Activated CD8-positive, alpha-beta T cell treated with anti-CD3 and anti-CD28 coated beads, Interleukin-2, amount 10 ng/mL, durations not matched to agents 7 days and 5 days (primary cell): ENCODE measurements at regions of chr17 and their contacts with region 1.

Region 1: DNA sequence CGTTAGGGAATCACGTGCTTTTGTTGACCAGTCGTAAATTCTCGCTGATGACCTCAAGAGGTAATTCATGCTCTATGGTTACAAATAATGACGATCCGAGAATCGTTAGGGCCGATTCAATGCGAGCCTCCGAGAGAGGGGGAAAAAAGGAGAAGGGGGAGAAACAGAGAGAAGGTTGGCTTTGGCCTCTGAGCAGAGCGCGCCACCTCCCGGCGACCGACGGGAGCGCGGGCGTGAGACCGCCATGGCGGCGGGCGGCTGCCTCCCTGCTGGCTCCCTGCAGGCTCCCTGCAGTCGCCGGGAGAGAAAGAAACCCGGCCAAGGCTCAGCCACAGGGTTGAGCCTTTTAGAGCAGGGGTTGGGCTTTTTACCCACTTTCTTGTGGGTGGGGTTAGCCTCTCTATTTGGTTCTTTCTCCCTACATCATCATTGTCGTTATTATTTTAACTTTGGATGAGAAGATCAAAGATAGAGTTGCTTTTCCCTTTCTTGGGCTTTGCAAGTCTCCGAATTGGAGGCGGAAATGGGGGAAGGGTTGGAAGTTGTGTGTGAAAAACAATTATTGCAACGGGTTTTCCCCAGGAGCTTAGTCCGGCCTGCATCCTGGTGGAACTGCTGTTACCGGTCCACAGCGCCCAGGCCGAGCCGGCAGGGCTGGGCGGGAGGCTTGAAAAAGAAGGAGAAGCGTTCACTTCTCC is 410 bp upstream of the HOXB5 start:
- DNase-seq: peak; percentile 86
- ATAC-seq: peak; percentile 65
- H3K4me3 Mint-ChIP-seq: peak overlapping the region; percentile 76
- H3K27ac Mint-ChIP-seq: peak overlapping the region; percentile 23
- H3K4me1 Mint-ChIP-seq: peaks cover 44% of the 10 kb centered on the region
- H3K27me3 Mint-ChIP-seq: peaks cover 76% of the 10 kb centered on the region

Region 2: DNA sequence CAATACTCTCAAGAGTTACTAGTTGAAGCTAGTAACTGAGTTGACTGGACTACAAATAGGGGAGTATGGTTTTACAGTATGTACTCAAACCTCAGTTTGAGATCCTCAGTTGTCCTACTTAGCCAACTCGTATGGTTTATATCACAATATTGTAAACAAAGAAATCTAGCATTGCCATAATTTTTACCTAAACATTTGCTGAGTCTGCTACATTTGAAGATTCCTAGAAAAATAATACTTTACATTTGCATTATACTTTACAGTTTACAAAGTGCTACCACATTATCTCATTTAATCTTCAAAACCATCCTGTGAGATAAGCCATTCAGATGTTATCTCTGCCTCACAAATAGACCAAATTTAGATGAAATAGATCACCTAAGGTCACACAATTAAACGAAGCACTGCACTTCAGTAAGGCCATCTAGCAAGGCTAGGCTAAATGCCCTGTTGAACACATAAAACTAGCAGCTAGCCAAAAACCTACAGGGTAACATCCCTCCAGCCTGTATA is 509.0 kb before region 1 on chr17:
- CTCF ChIA-PET with region 1: interaction called, 18 read pairs
- POLR2A ChIA-PET with region 1: no interaction called
- DNase-seq: no peak
- ATAC-seq: no peak
- H3K4me3 Mint-ChIP-seq: no peak overlapping the region
- H3K27ac Mint-ChIP-seq: no peak overlapping the region
- H3K4me1 Mint-ChIP-seq: peaks cover 7% of the 10 kb centered on the region
- H3K27me3 Mint-ChIP-seq: no peaks in the 10 kb centered on the region

Region 3: GRCh38 chr17:48295362-48296288 is 298.4 kb before region 1 on chr17:
- CTCF ChIA-PET with region 1: interaction called, 12 read pairs
- POLR2A ChIA-PET with region 1: no interaction called
- DNase-seq: no peak
- ATAC-seq: peak; percentile 68
- H3K4me3 Mint-ChIP-seq: peak overlapping the region; percentile 75
- H3K27ac Mint-ChIP-seq: peak overlapping the region; percentile 90
- H3K4me1 Mint-ChIP-seq: peaks cover 34% of the 10 kb centered on the region
- H3K27me3 Mint-ChIP-seq: no peaks in the 10 kb centered on the region

Region 4: GRCh38 chr17:48335858-48336500 is 258.0 kb before region 1 on chr17:
- CTCF ChIA-PET with region 1: interaction called, 59 read pairs
- POLR2A ChIA-PET with region 1: no interaction called
- DNase-seq: no peak
- ATAC-seq: peak; percentile 47
- H3K4me3 Mint-ChIP-seq: no peak overlapping the region
- H3K27ac Mint-ChIP-seq: no peak overlapping the region
- H3K4me1 Mint-ChIP-seq: peaks cover 5% of the 10 kb centered on the region
- H3K27me3 Mint-ChIP-seq: no peaks in the 10 kb centered on the region

Region 5: GRCh38 chr17:48457080-48457836 is 136.7 kb before region 1 on chr17:
- CTCF ChIA-PET with region 1: interaction called, 11 read pairs
- POLR2A ChIA-PET with region 1: no interaction called
- DNase-seq: peak; percentile 85
- ATAC-seq: peak; percentile 74
- H3K4me3 Mint-ChIP-seq: peak overlapping the region; percentile 72
- H3K27ac Mint-ChIP-seq: peak overlapping the region; percentile 60
- H3K4me1 Mint-ChIP-seq: peaks cover 65% of the 10 kb centered on the region
- H3K27me3 Mint-ChIP-seq: peaks cover 4% of the 10 kb centered on the region

Region 6: DNA sequence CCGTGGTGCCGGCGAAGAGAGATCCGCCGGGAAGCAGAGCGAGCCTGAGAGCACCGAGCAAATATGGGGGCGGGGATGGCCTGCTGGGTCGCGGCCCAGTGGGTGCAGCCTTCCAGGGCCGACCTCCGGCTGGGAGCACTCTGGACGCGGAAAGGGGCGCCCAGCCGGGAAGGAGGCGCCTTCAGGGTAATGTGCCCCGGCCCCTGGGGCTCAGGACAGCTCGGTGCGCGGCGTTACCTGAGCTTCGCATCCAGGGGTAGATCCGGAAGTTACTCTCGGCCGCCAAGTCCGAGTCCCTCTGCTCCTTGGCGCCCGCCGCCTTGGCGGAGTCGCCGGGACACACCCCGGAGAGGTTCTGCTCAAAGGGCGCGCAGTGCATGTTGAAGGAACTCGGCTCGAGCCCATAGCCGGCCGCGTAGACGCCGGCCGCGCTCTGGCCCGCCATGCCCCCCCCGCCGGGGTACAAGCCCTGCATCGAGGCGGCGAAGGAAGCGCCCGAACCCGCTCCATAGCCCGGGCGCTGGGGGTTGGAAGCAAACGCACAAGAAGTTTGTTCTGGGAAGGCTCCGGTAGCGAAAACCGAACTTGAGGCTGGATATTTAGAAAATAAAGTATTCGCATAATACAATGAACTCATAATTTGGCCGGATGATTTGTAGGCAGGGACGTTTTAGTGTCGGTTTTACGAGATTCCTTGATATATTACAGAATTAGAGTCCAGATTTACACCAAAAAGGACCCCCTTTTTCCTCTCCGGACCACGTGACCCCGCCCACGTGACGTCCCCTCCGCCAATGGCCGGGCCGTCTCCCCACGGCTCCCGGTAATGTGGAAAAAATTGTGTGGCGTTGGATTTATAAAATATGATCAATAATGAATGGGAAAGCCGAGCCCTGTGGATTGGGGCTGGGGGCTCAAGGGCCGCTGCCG is 16.6 kb after region 1 on chr17 and contains the start of gene HOXB7:
- CTCF ChIA-PET with region 1: interaction called, 14 read pairs
- POLR2A ChIA-PET with region 1: interaction called, 3 read pairs
- DNase-seq: peak; percentile 75
- ATAC-seq: peak; percentile 47
- H3K4me3 Mint-ChIP-seq: peak within 1 kb of the TSS; percentile 89
- H3K27ac Mint-ChIP-seq: peak within 1 kb of the TSS; percentile 71
- H3K4me1 Mint-ChIP-seq: peaks cover 36% of the 10 kb centered on the region
- H3K27me3 Mint-ChIP-seq: peaks cover 70% of the 10 kb centered on the region
- total RNA-seq, gene HOXB7: 0.87 to 0.91 TPM